Uterus (tissue), 4 donors: ENCODE measurements at regions of chr10 and their contacts with region 1.

Region 1: DNA sequence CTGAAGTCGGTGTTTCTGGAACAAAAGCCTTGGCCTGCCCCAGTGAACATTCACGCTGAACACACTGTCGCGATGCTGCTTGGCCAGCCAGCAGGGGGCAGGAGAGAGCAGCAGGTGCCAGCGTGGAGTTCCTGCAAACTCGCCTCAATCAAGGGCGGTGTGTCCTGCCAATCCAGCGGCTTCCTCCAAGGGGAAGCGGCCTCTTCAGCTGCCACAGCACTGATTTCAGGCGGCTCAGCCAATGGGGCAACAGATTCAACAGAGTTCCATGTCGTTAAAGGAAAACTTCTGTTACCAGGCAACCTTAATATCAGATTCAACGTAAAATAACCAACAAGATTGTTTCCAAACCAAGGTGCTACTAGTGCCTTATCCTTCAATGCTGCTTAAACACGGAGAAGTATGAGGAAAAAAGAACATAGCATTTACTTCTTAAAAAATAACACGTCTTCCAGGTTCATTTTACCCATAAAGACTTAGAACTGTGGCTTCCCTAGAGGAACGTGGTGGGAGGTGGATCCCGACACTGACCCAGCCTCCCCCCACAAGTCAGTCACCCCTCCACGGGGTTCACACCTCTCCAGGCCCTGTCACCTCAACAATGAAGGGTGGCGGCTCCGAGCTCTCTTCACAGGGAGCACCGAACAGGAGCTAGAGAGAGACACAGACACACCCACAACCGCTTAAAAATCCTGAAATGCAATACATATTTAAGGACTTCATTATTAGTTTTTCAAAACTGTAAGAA is 178.2 kb downstream of the DIP2C start:
- DNase-seq: peak; percentile 90 to 93
- H3K4me3 ChIP-seq: no peak overlapping the region
- H3K27ac ChIP-seq: no peak overlapping the region
- H3K4me1 ChIP-seq: peaks cover 0 to 4% of the 10 kb centered on the region in 2 donors
- H3K27me3 ChIP-seq: no peaks in the 10 kb centered on the region
- CTCF ChIP-seq: peak; percentile 93 to 98 (median 94)
- POLR2A ChIP-seq: peak in 1 of 2 donors; percentile 14

Region 2: GRCh38 chr10:323651-324293 is 187.5 kb before region 1 on chr10:
- intact Hi-C with region 1: no loop called
- DNase-seq: peak; percentile 88 to 93
- H3K4me3 ChIP-seq: peak overlapping the region in 1 of 2 donors; percentile 5
- H3K27ac ChIP-seq: peak overlapping the region; percentile 61 to 76
- H3K4me1 ChIP-seq: no peaks in the 10 kb centered on the region
- H3K27me3 ChIP-seq: no peaks in the 10 kb centered on the region
- CTCF ChIP-seq: no peak
- POLR2A ChIP-seq: no peak

Region 3: DNA sequence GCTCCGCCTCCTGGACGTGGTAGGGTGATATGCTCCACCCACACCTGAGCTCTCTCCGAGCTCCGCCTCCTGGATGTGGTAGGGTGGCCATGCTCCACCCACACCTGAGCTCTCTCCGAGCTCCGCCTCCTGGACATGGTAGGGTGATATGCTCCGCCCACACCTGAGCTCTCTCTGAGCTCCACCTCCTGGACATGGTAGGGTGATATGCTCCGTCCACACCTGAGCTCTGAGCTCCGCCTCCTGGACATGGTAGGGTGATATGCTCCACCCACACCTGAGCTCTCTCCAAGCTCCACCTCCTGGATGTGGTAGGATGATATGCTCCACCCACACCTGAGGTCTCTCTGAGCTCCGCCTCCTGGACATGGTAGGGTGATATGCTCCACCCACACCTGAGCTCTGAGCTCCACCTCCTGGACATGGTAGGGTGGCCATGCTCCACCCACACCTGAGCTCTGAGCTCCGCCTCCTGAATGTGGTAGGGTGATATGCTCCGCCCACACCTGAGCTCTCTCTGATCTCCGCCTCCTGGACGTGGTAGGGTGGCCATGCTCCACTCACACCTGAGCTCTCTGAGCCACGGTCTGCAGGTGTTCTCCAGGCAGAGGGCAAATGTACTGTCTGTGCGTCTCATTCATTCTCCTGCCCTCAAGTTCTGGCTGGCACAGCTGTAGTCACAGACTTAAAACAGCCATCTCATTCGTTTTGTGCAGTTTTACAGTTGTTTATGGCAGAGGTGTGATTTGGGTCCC is 74.2 kb before region 1 on chr10:
- intact Hi-C with region 1: no loop called
- DNase-seq: no peak
- H3K4me3 ChIP-seq: no peak overlapping the region
- H3K27ac ChIP-seq: no peak overlapping the region
- H3K4me1 ChIP-seq: no peaks in the 10 kb centered on the region
- H3K27me3 ChIP-seq: no peaks in the 10 kb centered on the region
- CTCF ChIP-seq: no peak
- POLR2A ChIP-seq: no peak

Region 4: GRCh38 chr10:689433-690371 is 178.4 kb after region 1 on chr10 and contains the start of gene DIP2C:
- intact Hi-C with region 1: loop called (anchors 10 kb)
- DNase-seq: peak; percentile 78 to 79
- H3K4me3 ChIP-seq: peak within 1 kb of the TSS; percentile 82
- H3K27ac ChIP-seq: peak within 1 kb of the TSS; percentile 91 to 94
- H3K4me1 ChIP-seq: peaks cover 0 to 4% of the 10 kb centered on the region in 2 donors
- H3K27me3 ChIP-seq: no peaks in the 10 kb centered on the region
- CTCF ChIP-seq: peak in 1 of 4 experiments; percentile 3
- POLR2A ChIP-seq: peak in 1 of 2 donors; percentile 52
- total RNA-seq, gene DIP2C: 10.5 to 40.5 (median 19.5) TPM

Region 5: GRCh38 chr10:784403-785088 is 273.3 kb after region 1 on chr10:
- intact Hi-C with region 1: loop called (anchors 5 kb)
- DNase-seq: peak in 1 of 2 donors; percentile 60
- H3K4me3 ChIP-seq: peak overlapping the region; percentile 3 to 18
- H3K27ac ChIP-seq: no peak overlapping the region
- H3K4me1 ChIP-seq: peaks cover 0 to 5% of the 10 kb centered on the region in 2 donors
- H3K27me3 ChIP-seq: no peaks in the 10 kb centered on the region
- CTCF ChIP-seq: no peak
- POLR2A ChIP-seq: no peak